Transverse colon (tissue), 4 donors: ENCODE measurements at regions of chr14 and their contacts with region 1.

Region 1: DNA sequence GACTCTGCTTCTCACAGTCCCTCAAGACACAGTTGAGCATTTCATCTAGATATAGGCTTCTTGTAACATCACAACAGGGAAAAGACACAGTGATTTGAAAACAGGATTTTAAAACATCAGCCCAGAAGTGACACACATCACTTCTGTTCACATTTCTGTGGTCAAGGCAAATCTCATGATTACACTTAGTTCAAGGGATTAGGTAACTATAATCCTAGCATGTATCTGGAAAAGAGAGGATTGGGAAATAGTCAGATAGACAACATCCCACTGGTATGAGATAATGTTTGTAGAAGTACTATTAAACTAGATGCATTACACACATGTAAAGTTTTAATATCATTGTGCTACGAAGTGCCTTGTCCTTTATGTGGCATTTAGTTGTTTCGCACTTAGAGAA is 252.6 kb upstream of the PRKD1 start:
- DNase-seq: no peak
- H3K4me3 ChIP-seq: no peak overlapping the region
- H3K27ac ChIP-seq: no peak overlapping the region
- H3K4me1 ChIP-seq: no peaks in the 10 kb centered on the region
- H3K27me3 ChIP-seq: no peaks in the 10 kb centered on the region
- CTCF ChIP-seq: no peak
- EP300 ChIP-seq: no peak
- POLR2A ChIP-seq: no peak

Region 2: GRCh38 chr14:28944605-28945004 is 1235.6 kb before region 1 on chr14:
- in situ Hi-C with region 1: no loop called
- intact Hi-C with region 1: loop called (anchors 5 kb)
- DNase-seq: no peak
- H3K4me3 ChIP-seq: no peak overlapping the region
- H3K27ac ChIP-seq: no peak overlapping the region
- H3K4me1 ChIP-seq: no peaks in the 10 kb centered on the region
- H3K27me3 ChIP-seq: no peaks in the 10 kb centered on the region
- CTCF ChIP-seq: no peak
- EP300 ChIP-seq: no peak
- POLR2A ChIP-seq: no peak

Region 3: DNA sequence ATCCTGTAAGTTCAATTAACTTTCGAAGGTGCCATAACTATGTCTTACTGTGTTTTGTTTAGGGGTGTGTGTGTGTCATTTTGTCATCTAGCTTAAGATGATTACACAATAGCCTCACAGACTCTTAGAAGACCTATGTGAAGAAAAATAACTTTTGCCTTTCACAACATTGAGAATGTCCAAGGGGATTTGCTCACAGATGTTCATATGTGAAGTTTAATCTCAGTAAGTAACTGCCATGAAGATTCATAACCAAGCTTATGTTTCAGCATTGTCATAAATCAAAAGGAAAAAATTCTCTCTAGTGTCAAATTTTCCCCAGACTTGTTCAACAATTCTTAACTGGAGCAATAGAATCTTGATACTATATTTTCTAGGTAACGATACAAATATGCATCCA is 26.5 kb before region 1 on chr14:
- in situ Hi-C with region 1: no loop called
- intact Hi-C with region 1: no loop called
- DNase-seq: no peak
- H3K4me3 ChIP-seq: no peak overlapping the region
- H3K27ac ChIP-seq: no peak overlapping the region
- H3K4me1 ChIP-seq: no peaks in the 10 kb centered on the region
- H3K27me3 ChIP-seq: no peaks in the 10 kb centered on the region
- CTCF ChIP-seq: no peak
- EP300 ChIP-seq: no peak
- POLR2A ChIP-seq: no peak